Activated CD4-positive, alpha-beta T cell treated with anti-CD3 and anti-CD28 coated beads for 36 hours (primary cell): ENCODE measurements at regions of chr6 and their contacts with region 1.

Region 1: DNA sequence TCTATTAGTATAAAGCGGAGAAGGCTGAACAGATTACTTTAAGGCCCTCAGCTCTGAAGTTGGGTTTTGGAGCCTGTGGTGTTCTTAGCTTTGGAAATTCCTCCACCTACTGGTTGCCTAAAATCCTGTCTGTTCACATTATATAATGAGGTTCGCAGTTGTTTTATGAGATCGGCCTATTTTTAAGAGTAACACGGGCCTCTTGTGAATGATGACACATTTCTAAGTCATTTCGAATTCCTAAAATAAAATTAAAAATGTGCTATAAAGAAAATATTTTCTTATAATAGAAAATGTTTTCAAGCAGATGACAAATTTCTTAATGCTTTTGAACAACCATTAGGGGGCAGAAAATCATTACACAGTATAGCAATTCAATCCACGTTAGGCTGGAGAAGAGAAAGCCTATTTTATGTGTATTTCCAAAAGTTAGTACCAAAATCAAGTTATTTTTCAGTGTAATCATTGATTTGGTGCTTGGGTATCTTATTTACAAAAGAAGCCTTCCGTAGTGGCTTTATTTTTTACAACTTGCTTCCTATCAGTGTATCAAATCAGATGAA is 15.8 kb upstream of the FAM8A1 start:
- DNase-seq: no peak
- ATAC-seq: peak; percentile 56
- H3K4me3 Mint-ChIP-seq: no peak overlapping the region
- H3K27ac Mint-ChIP-seq: no peak overlapping the region
- H3K4me1 Mint-ChIP-seq: peaks cover 12% of the 10 kb centered on the region
- H3K27me3 Mint-ChIP-seq: peaks cover 5% of the 10 kb centered on the region

Region 2: DNA sequence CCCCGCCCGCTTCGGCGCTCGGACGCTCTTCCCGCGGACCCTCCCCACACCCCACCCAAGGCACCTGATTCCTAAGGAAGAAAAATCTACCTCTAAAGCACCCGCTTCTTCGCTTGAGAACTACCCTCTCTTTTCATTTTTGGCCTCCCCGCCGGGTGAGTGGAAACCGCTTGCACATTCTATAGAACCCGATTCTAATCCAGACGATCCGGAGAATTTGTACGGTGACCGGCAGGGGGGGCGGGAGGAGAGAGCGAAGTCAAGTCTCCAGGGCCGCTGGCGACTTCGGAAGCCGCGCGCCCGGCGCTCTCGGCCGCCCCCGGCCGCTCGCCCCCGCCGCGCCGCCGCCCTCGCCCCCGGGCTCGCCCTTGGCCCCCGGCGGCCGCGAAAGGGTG is 303.2 kb before region 1 on chr6 and contains the start of gene RBM24:
- CTCF ChIA-PET with region 1: no interaction called
- POLR2A ChIA-PET with region 1: no interaction called
- intact Hi-C with region 1: loop called in 1 of 2 experiments (anchors 5 kb)
- DNase-seq: peak; percentile 71
- ATAC-seq: peak; percentile 47
- H3K4me3 Mint-ChIP-seq: peak within 1 kb of the TSS; percentile 53
- H3K27ac Mint-ChIP-seq: no peak within 1 kb of the TSS
- H3K4me1 Mint-ChIP-seq: peaks cover 8% of the 10 kb centered on the region
- H3K27me3 Mint-ChIP-seq: peaks cover 51% of the 10 kb centered on the region
- total RNA-seq, gene RBM24: not detected

Region 3: GRCh38 chr6:17505062-17505476 is 79.3 kb before region 1 on chr6:
- CTCF ChIA-PET with region 1: interaction called, 3 read pairs
- POLR2A ChIA-PET with region 1: no interaction called
- intact Hi-C with region 1: loop called in 1 of 2 experiments (anchors 1 kb)
- DNase-seq: no peak
- ATAC-seq: no peak
- H3K4me3 Mint-ChIP-seq: no peak overlapping the region
- H3K27ac Mint-ChIP-seq: no peak overlapping the region
- H3K4me1 Mint-ChIP-seq: no peaks in the 10 kb centered on the region
- H3K27me3 Mint-ChIP-seq: peaks cover 5% of the 10 kb centered on the region

Region 4: DNA sequence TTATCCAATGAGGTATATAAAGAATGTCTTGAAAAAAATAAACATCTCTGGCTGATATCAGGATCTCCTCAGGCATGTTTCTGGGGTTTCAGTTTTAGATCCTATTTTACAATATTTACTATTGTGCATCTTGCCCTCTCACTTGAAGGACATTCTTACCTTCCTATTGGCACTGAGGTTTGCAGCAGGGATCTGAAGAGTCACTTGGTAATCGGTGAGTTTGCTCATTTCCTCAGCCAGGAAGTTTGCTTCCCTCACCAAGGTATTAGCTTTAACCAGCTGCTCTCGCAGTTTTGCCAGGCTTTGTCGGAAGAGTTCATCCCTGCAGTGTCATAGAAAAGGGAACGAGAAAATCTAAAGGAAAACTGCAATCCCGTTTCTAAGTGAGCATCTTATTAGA is 224.3 kb after region 1 on chr6:
- CTCF ChIA-PET with region 1: interaction called, 4 read pairs
- POLR2A ChIA-PET with region 1: no interaction called
- intact Hi-C with region 1: loop called (anchors 1 kb)
- DNase-seq: no peak
- ATAC-seq: no peak
- H3K4me3 Mint-ChIP-seq: no peak overlapping the region
- H3K27ac Mint-ChIP-seq: no peak overlapping the region
- H3K4me1 Mint-ChIP-seq: no peaks in the 10 kb centered on the region
- H3K27me3 Mint-ChIP-seq: peaks cover 9% of the 10 kb centered on the region

Region 5: GRCh38 chr6:17820055-17820454 is 235.7 kb after region 1 on chr6:
- CTCF ChIA-PET with region 1: interaction called, 4 read pairs
- POLR2A ChIA-PET with region 1: no interaction called
- intact Hi-C with region 1: loop called (anchors 1 kb)
- DNase-seq: no peak
- ATAC-seq: no peak
- H3K4me3 Mint-ChIP-seq: no peak overlapping the region
- H3K27ac Mint-ChIP-seq: no peak overlapping the region
- H3K4me1 Mint-ChIP-seq: no peaks in the 10 kb centered on the region
- H3K27me3 Mint-ChIP-seq: peaks cover 3% of the 10 kb centered on the region